ENCODE measurements at regions of chr6 and their contacts with region 1.

Region 1: DNA sequence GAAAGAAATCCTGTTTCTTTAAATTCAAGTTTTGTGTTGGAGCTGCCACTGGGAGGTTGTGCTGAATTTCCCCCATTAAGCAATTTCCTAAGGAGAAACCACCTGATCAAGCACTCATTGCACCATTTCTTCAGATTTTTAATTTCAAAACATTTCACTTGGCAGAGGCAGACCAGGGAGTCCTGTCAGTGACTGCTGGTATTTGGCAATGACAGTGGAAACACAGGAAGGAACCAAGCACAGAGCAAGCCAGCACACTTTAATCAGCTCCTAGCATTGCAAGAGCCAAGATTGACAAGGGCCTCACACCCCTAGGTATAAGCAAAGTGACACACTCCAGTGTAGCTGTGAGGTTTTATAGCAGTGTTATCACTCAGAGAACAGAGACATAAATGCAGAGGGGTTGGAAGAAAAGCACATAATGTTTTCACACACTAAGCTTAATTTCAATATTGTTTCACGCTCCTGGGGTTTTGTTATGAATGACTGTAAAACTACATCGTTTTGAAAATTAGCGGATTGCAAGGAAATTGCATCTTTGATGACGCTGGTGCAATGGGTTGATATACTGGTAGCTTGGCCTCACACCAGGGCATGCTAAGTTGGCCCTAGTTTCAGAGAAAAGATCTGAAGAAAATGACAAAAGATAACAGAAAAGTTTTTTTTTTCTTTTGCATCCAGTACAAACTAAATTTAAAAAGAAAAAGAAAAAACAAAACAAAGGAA is 768.4 kb downstream of the TFAP2A start:
- DNase-seq: no peak
- ATAC-seq: no peak
- H3K4me3 ChIP-seq: no peak overlapping the region
- H3K27ac ChIP-seq: no peak overlapping the region
- H3K4me1 ChIP-seq: no peaks in the 10 kb centered on the region
- H3K27me3 ChIP-seq: no peaks in the 10 kb centered on the region
- CTCF ChIP-seq: no peak
- EP300 ChIP-seq: no peak
- POLR2A ChIP-seq: no peak
- RAD21 ChIP-seq: no peak

Region 2: DNA sequence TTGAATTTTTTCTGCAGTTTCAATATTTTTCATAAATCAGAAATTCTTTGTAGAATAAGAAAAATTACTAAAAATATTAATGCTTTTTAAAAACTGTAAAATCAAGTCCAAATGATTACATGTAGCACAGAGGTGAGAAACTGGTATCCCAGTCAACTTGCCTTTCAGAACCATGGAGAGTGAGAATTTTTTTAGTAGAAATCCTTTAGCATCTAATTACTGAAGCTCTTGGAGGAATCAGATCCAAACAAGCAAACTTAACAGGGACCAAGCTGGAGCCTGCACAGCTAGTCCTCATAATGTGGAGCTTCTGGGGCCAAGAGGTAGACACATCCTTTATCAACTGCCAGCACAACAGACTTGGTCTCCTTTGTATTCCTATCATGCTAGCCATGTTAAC is 43.9 kb after region 1 on chr6:
- CTCF ChIA-PET with region 1: no interaction called
- POLR2A ChIA-PET with region 1: no interaction called
- in situ Hi-C with region 1: no loop called
- intact Hi-C with region 1: loop called (anchors 1 kb)
- DNase-seq: no peak
- ATAC-seq: no peak
- H3K4me3 ChIP-seq: no peak overlapping the region
- H3K27ac ChIP-seq: no peak overlapping the region
- H3K4me1 ChIP-seq: no peaks in the 10 kb centered on the region
- H3K27me3 ChIP-seq: no peaks in the 10 kb centered on the region
- CTCF ChIP-seq: no peak
- EP300 ChIP-seq: no peak
- POLR2A ChIP-seq: no peak
- RAD21 ChIP-seq: no peak